Activated B cell treated with CpG ODN at 0.5 μM for 24 hours (primary cell): ENCODE measurements at regions of chr3 and their contacts with region 1.

Region 1: DNA sequence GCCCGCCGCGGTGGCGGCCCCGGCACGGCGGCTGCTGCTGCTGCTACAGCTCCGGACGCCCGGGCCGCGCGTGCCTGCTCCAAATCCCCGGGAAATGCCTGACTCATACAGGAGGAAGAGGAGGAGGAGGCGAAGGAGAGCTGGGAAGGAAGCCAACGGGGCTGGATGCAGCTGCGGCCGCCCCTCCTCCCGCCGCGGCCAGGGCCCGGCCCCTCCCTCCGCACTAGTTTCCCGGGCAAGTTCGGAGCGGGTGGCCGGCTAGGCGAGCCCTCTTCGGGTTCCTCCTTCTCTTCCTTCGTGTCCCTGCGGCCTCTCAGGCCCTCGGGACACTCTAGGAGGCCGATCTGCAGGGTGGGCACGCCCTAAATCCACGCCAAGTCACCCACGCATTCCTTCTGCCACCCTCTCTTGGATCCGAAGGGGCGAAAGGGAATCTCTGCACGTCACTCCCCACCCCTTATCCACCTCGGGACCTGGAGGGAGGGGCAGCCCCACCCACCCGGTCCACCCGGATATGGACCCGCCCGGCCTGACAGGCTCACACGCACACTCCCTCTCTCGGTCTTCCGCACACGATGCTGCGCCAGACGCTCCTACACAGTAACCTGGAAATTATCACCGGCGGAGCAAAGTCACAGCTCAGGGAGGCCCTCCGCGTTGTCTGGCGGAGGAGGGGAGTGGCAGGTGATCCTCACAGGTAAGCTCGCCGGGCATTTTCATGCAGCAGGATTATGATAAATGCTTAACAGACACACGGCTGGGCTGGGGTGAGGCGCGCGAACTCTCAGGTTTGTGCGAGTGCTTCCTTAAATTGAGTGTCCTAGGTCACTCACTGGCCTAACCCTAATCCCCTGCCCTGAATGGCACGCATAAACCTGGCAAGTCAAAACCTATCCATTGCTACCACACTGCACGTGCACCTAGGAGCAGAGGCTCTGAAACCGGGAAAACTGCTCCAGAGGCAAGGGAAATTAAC is at the starts of genes OSBPL10 and ZNF860:
- DNase-seq: peak; percentile 63
- ATAC-seq: peak; percentile 62
- H3K4me3 Mint-ChIP-seq: peak within 1 kb of the TSS; percentile 97
- H3K27ac Mint-ChIP-seq: peak within 1 kb of the TSS; percentile 92
- H3K4me1 Mint-ChIP-seq: peaks cover 85% of the 10 kb centered on the region
- H3K27me3 Mint-ChIP-seq: no peaks in the 10 kb centered on the region
- CTCF ChIP-seq: no peak
- total RNA-seq, gene OSBPL10: 125 and 137 TPM in 2 replicates
- total RNA-seq, gene ZNF860: 16.6 and 19.1 TPM in 2 replicates

Region 2: DNA sequence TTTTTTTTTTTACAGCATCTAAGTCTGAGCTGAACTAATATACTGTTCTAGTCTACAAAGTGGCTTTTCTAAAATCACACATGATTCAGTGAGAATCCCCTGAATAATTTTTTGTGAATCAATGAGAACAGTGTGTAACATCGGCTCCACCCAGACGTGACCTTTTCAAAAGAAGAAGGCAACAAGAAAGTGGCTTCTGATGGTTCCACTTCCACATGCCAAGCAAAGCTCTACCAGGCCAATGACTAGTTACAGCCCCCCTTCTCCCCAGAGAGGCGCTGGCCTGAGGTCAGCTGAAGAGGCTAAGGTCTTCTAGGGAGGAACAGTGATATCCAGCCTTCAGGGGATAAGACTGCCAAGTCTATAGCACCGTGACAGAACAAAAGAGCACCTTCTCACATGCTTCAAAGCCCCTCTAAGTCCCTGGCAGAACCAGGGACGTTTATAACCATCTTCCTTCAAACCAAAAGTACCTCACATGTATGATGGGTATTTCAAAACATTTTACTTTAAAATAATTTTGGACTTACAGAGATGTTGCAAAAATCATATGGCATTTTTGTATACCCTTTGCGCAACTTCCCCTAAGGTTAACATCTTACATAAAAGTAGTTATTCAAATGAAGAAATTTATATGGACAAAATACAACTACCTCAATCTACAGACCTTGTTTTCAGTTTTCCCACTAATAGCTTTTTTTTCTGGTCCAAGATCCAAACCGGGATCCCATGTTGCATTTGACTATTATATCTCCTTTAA is 178.3 kb before region 1 on chr3:
- CTCF ChIA-PET with region 1: no interaction called
- POLR2A ChIA-PET with region 1: interaction called, 3 read pairs
- intact Hi-C with region 1: loop called (anchors 1 kb)
- DNase-seq: peak; percentile 35
- ATAC-seq: peak; percentile 87
- H3K4me3 Mint-ChIP-seq: peak overlapping the region; percentile 7
- H3K27ac Mint-ChIP-seq: peak overlapping the region; percentile 73
- H3K4me1 Mint-ChIP-seq: peaks cover 47% of the 10 kb centered on the region
- H3K27me3 Mint-ChIP-seq: no peaks in the 10 kb centered on the region
- CTCF ChIP-seq: no peak

Region 3: GRCh38 chr3:31880020-31880419 is 101.5 kb before region 1 on chr3:
- CTCF ChIA-PET with region 1: no interaction called
- POLR2A ChIA-PET with region 1: interaction called, 3 read pairs
- intact Hi-C with region 1: loop called (anchors 1 kb)
- DNase-seq: no peak
- ATAC-seq: peak; percentile 76
- H3K4me3 Mint-ChIP-seq: no peak overlapping the region
- H3K27ac Mint-ChIP-seq: peak overlapping the region; percentile 69
- H3K4me1 Mint-ChIP-seq: peaks cover 72% of the 10 kb centered on the region
- H3K27me3 Mint-ChIP-seq: no peaks in the 10 kb centered on the region
- CTCF ChIP-seq: no peak

Region 4: GRCh38 chr3:31946484-31947081 is 34.9 kb before region 1 on chr3:
- CTCF ChIA-PET with region 1: interaction called, 3 read pairs
- POLR2A ChIA-PET with region 1: interaction called, 15 read pairs
- intact Hi-C with region 1: loop called (anchors 1 kb)
- DNase-seq: peak; percentile 30
- ATAC-seq: peak; percentile 46
- H3K4me3 Mint-ChIP-seq: peak overlapping the region; percentile 50
- H3K27ac Mint-ChIP-seq: peak overlapping the region; percentile 97
- H3K4me1 Mint-ChIP-seq: peaks cover 83% of the 10 kb centered on the region
- H3K27me3 Mint-ChIP-seq: no peaks in the 10 kb centered on the region
- CTCF ChIP-seq: no peak

Region 5: GRCh38 chr3:31960793-31961431 is 20.6 kb before region 1 on chr3:
- CTCF ChIA-PET with region 1: interaction called, 13 read pairs
- POLR2A ChIA-PET with region 1: interaction called, 29 read pairs
- intact Hi-C with region 1: loop called (anchors 1 kb)
- DNase-seq: no peak
- ATAC-seq: peak; percentile 66
- H3K4me3 Mint-ChIP-seq: peak overlapping the region; percentile 78
- H3K27ac Mint-ChIP-seq: peak overlapping the region; percentile 94
- H3K4me1 Mint-ChIP-seq: peaks cover 80% of the 10 kb centered on the region
- H3K27me3 Mint-ChIP-seq: no peaks in the 10 kb centered on the region
- CTCF ChIP-seq: no peak

Region 6: DNA sequence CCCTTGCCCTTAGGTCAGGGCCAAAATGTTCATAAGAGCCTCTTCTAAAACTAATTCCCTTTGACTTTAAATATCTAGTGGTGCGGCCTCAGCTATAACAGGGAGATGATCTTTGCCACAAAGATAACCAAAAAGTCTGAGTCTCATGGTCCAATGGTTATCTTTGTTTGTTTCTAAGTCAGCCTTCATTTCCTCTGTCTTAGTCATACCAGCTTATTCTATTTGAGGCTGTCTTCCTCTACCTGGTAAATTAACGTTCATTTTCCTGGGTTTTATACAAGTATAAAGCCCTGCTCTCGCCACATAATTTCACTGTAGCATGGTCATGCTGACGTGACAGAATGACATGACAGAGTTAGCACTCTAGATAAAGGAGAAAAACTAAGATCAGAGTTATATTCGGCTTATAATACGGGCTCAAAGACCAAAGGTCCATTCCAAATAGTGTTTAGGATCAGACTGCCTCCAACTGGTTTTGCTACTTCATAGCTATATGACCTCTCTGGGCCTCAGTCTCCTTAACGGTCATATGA is 18.5 kb after region 1 on chr3:
- CTCF ChIA-PET with region 1: interaction called, 12 read pairs
- POLR2A ChIA-PET with region 1: interaction called, 65 read pairs
- intact Hi-C with region 1: loop called (anchors 1 kb)
- DNase-seq: no peak
- ATAC-seq: peak; percentile 86
- H3K4me3 Mint-ChIP-seq: peak overlapping the region; percentile 65
- H3K27ac Mint-ChIP-seq: peak overlapping the region; percentile 94
- H3K4me1 Mint-ChIP-seq: peaks cover 68% of the 10 kb centered on the region
- H3K27me3 Mint-ChIP-seq: no peaks in the 10 kb centered on the region
- CTCF ChIP-seq: no peak

Region 7: GRCh38 chr3:32106280-32106928 is 124.9 kb after region 1 on chr3 and contains the start of gene GPD1L:
- CTCF ChIA-PET with region 1: no interaction called
- POLR2A ChIA-PET with region 1: interaction called, 6 read pairs
- intact Hi-C with region 1: loop called (anchors 1 kb)
- DNase-seq: peak; percentile 93
- ATAC-seq: peak; percentile 99
- H3K4me3 Mint-ChIP-seq: peak within 1 kb of the TSS; percentile 96
- H3K27ac Mint-ChIP-seq: peak within 1 kb of the TSS; percentile 87
- H3K4me1 Mint-ChIP-seq: peaks cover 18% of the 10 kb centered on the region
- H3K27me3 Mint-ChIP-seq: no peaks in the 10 kb centered on the region
- CTCF ChIP-seq: no peak
- total RNA-seq, gene GPD1L: 8.2 and 9.6 TPM in 2 replicates

Region 8: DNA sequence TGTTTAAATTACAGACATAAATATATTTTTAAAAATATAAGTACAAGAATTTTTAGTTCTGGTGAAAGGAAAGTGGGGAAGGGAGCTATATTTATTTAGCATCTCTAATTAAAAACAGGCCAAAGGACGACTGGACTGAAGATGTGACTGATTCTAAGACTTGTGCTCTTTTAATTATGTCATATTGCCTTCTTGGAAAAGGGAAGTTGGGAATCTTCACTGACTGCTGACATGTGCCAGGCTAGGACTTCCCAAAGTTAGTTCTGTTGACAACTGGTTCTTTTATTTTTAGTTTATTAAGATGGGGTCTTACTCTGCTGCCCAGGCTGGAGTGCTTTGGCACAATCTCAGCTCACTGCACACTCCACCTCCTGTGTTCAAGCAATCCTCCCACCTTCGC is 717.0 kb after region 1 on chr3:
- CTCF ChIA-PET with region 1: no interaction called
- POLR2A ChIA-PET with region 1: no interaction called
- intact Hi-C with region 1: no loop called
- DNase-seq: no peak
- ATAC-seq: no peak
- H3K4me3 Mint-ChIP-seq: no peak overlapping the region
- H3K27ac Mint-ChIP-seq: no peak overlapping the region
- H3K4me1 Mint-ChIP-seq: peaks cover 28% of the 10 kb centered on the region
- H3K27me3 Mint-ChIP-seq: no peaks in the 10 kb centered on the region
- CTCF ChIP-seq: no peak